A673 (cell line): ENCODE measurements at regions of chr5 and their contacts with region 1.

Region 1: GRCh38 chr5:42767491-42768105 is 11.0 kb downstream of the CCDC152 start:
- DNase-seq: peak; percentile 50
- H3K4me3 ChIP-seq: no peak overlapping the region
- H3K27ac ChIP-seq: no peak overlapping the region
- H3K4me1 ChIP-seq: peaks cover 1% of the 10 kb centered on the region
- H3K27me3 ChIP-seq: no peaks in the 10 kb centered on the region
- CTCF ChIP-seq: peak; percentile 65

Region 2: GRCh38 chr5:41770799-41771198 is 996.8 kb before region 1 on chr5:
- CTCF ChIA-PET with region 1: no interaction called
- POLR2A ChIA-PET with region 1: no interaction called
- intact Hi-C with region 1: no loop called
- DNase-seq: no peak
- H3K4me3 ChIP-seq: no peak overlapping the region
- H3K27ac ChIP-seq: no peak overlapping the region
- H3K4me1 ChIP-seq: peaks cover 4% of the 10 kb centered on the region
- H3K27me3 ChIP-seq: no peaks in the 10 kb centered on the region
- CTCF ChIP-seq: no peak

Region 3: GRCh38 chr5:42423285-42424165 is 344.1 kb before region 1 on chr5 and contains the start of gene GHR:
- CTCF ChIA-PET with region 1: interaction called, 3 read pairs
- POLR2A ChIA-PET with region 1: no interaction called
- intact Hi-C with region 1: loop called (anchors 2 kb)
- DNase-seq: peak; percentile 89
- H3K4me3 ChIP-seq: peak within 1 kb of the TSS; percentile 47
- H3K27ac ChIP-seq: no peak within 1 kb of the TSS
- H3K4me1 ChIP-seq: peaks cover 5% of the 10 kb centered on the region
- H3K27me3 ChIP-seq: peaks cover 24% of the 10 kb centered on the region
- CTCF ChIP-seq: peak; percentile 77
- total RNA-seq, gene GHR: not detected in 2 replicates

Region 4: DNA sequence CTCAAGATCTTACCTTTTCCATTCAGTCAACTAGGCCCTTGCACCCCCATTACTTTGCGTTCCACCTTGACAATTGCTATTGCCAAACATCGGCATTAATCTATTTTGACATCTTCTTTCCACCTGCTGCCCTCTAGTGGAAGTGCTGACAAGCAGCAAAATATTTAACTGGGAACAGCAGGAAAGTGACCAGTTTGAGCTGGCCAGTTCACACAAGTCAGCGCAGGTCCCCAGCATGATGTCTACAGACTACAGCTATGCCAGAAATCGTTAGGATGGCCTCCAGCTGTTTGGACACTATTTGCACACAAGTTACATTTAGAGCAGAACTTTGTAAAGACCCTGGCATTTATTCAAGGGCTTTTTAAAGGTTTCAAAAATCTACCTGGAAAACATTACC is 184.3 kb before region 1 on chr5:
- CTCF ChIA-PET with region 1: interaction called, 3 read pairs
- POLR2A ChIA-PET with region 1: no interaction called
- intact Hi-C with region 1: loop called (anchors 5 kb)
- DNase-seq: peak; percentile 45
- H3K4me3 ChIP-seq: no peak overlapping the region
- H3K27ac ChIP-seq: no peak overlapping the region
- H3K4me1 ChIP-seq: no peaks in the 10 kb centered on the region
- H3K27me3 ChIP-seq: peaks cover 34% of the 10 kb centered on the region
- CTCF ChIP-seq: peak; percentile 89